MCF 10A (cell line): ENCODE measurements at regions of chr14 and their contacts with region 1.

Region 1: GRCh38 chr14:58455587-58456228 is 28.2 kb downstream of the KIAA0586 start:
- DNase-seq: peak; percentile 80
- H3K4me3 Mint-ChIP-seq: peak overlapping the region; percentile 47
- H3K27ac Mint-ChIP-seq: peak overlapping the region; percentile 87
- H3K4me1 Mint-ChIP-seq: peaks cover 13% of the 10 kb centered on the region
- H3K27me3 Mint-ChIP-seq: no peaks in the 10 kb centered on the region
- CTCF ChIP-seq: no peak

Region 2: GRCh38 chr14:58444627-58445026 is 11.1 kb before region 1 on chr14:
- CTCF ChIA-PET with region 1: no interaction called
- POLR2A ChIA-PET with region 1: interaction called, 14 read pairs
- intact Hi-C with region 1: no loop called
- DNase-seq: no peak
- H3K4me3 Mint-ChIP-seq: no peak overlapping the region
- H3K27ac Mint-ChIP-seq: no peak overlapping the region
- H3K4me1 Mint-ChIP-seq: no peaks in the 10 kb centered on the region
- H3K27me3 Mint-ChIP-seq: no peaks in the 10 kb centered on the region
- CTCF ChIP-seq: no peak